Dorsolateral prefrontal cortex (tissue), 120 donors: ENCODE measurements at regions of chr6 and their contacts with region 1.

Region 1: DNA sequence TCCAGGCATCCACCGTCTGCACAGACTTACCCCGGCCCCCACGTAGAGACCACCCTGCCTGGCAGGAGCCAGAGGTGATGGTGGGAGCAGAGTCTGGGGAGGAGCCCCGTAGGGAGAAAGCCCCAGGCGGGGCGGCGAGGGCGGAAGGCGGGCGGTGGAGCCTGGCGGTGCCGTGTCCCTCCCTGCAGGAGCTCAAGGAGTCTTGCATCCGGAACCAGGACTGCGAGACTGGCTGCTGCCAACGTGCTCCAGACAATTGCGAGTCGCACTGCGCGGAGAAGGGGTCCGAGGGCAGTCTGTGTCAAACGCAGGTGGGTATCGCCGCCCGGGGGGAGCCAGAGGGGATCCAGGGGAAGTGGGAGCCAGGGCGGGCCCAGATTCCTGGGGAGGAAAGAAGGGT is 6.0 kb downstream of the CLPSL1 start:
- DNase-seq: peak in 1 of 10 donors; percentile 58
- H3K4me3 ChIP-seq: peak overlapping the region in 8 of 59 donors; percentile 4 to 42 (median 25)
- H3K27ac ChIP-seq: no peak overlapping the region
- H3K27me3 ChIP-seq: peaks cover 0 to 32% (median 11%) of the 10 kb centered on the region in 45 donors
- CTCF ChIP-seq: no peak

Region 2: GRCh38 chr6:35797837-35798526 is 11.2 kb after region 1 on chr6:
- intact Hi-C with region 1: loop called (anchors 1 kb)
- DNase-seq: no peak
- H3K4me3 ChIP-seq: no peak overlapping the region
- H3K27ac ChIP-seq: no peak overlapping the region
- H3K27me3 ChIP-seq: peaks cover 0 to 3% (median 0%) of the 10 kb centered on the region in 45 donors
- CTCF ChIP-seq: no peak

Region 3: GRCh38 chr6:35810971-35811497 is 24.2 kb after region 1 on chr6:
- intact Hi-C with region 1: no loop called
- DNase-seq: no peak
- H3K4me3 ChIP-seq: no peak overlapping the region
- H3K27ac ChIP-seq: no peak overlapping the region
- H3K27me3 ChIP-seq: peaks cover 0 to 4% (median 0%) of the 10 kb centered on the region in 45 donors
- CTCF ChIP-seq: no peak